Posterior cingulate gyrus (tissue), 11 donors: ENCODE measurements at regions of chr2 and their contacts with region 1.

Region 1: GRCh38 chr2:6917071-6917760 is at the start of gene RNF144A:
- DNase-seq: peak; percentile 54 to 96 (median 69)

Region 2: DNA sequence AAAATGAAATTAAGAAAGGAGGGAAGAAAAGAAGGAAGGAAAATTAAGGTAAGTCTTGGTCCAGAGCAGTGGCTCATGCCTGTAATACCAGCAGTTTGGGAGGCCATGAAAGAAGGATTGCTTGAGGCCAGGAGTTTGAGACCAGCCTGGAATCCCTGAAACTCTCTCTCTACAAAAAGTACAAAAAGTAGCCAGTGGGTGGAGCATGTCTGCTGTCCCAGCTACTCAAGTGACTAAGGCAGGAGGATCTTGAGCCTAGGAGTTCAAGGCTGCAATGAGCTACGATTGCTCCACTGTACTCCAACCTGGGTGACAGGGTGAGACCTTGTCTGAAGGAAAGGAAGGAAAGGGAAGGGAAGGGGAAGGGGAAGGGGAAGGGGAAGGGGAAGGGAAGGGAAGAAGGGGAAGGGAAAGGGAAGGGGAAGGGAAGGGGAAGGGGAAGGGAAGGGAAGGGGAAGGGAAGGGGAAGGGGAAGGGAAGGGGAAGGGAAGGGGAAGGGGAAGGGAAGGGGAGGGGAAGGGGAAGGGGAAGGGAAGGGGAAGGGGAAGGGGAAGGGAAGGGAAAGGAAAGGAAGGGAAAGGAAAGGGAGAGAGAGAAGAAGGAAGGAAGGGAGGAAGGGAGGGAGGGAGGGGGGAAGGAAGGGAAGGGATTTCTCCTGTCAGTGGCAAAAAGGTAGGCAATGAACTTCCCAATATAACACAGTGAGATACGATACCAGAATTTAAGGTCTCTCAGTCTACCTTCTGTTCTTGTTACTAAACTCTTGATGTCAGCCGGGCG is 464.3 kb before region 1 on chr2:
- intact Hi-C with region 1: no loop called
- DNase-seq: no peak

Region 3: GRCh38 chr2:7003895-7004294 is 86.7 kb after region 1 on chr2:
- intact Hi-C with region 1: no loop called
- DNase-seq: no peak

Region 4: GRCh38 chr2:7014174-7014640 is 97.0 kb after region 1 on chr2:
- intact Hi-C with region 1: loop called (anchors 5 kb)
- DNase-seq: peak in 6 of 10 donors; percentile 44 to 93 (median 54)

Region 5: GRCh38 chr2:7044261-7045250 is 127.3 kb after region 1 on chr2:
- intact Hi-C with region 1: loop called (anchors 1 kb)
- DNase-seq: peak; percentile 54 to 96 (median 76)

Region 6: DNA sequence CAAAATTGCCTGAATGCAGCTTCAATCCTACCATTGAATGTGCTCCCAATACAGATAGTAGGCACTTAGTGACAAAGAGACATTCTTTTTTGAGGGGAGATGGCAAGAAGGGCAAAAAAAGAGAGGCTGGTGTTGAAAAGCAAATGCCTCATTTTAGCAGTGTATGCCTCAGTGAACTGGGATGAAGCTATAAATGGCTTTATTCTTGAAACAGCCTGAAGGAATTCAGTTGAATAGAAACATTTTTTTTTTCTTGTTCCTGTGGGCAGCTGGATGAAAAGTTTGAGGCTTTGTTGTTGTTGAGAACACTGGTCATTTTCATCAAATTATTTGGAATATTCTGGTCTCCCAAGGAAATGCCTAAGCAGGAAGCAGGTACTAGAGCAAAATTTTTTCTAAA is 228.9 kb after region 1 on chr2:
- intact Hi-C with region 1: no loop called
- DNase-seq: no peak